Activated naive CD8-positive, alpha-beta T cell treated with anti-CD3 and anti-CD28 coated beads, Interleukin-2, amount 10 ng/mL, durations not matched to agents 7 days and 5 days (primary cell): ENCODE measurements at regions of chr12 and their contacts with region 1.

Region 1: DNA sequence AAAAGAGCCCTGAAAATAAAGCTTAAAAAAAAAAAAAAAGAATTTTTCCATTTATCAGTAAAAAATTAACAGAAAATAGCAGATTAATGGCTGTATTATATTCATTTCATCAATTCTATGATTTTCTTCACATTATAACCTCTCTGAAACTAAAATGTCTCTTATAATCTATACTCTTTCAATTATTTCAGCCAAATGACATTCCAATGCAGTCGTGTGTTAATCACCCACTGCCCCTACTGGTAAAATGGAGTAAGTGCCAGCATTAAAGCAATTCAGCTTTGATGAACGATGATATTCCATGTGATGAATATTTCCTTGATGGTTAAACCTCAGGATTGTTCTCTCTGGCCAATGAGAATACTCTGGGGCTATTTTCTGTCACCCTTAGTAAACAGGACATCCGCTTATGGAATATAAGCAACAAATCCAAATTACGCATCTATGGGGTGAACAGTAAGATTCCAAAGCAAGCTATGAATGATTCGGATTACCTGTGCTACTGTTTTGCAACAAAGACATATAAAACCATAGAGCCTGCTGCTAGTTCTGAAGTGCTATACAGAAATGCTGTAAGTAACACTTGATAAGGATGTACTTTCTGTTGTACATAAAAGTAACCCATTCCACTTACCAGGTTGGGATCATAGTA is 20.3 kb upstream of the SYCP3 start:
- DNase-seq: no peak
- ATAC-seq: no peak
- H3K4me3 Mint-ChIP-seq: no peak overlapping the region
- H3K27ac Mint-ChIP-seq: no peak overlapping the region
- H3K4me1 Mint-ChIP-seq: peaks cover 2% of the 10 kb centered on the region
- H3K27me3 Mint-ChIP-seq: no peaks in the 10 kb centered on the region

Region 2: GRCh38 chr12:101779626-101780025 is 20.1 kb after region 1 on chr12:
- POLR2A ChIA-PET with region 1: interaction called, 11 read pairs
- DNase-seq: no peak
- ATAC-seq: no peak
- H3K4me3 Mint-ChIP-seq: no peak overlapping the region
- H3K27ac Mint-ChIP-seq: no peak overlapping the region
- H3K4me1 Mint-ChIP-seq: peaks cover 34% of the 10 kb centered on the region
- H3K27me3 Mint-ChIP-seq: no peaks in the 10 kb centered on the region